PC-9 (cell line): ENCODE measurements at regions of chr1 and their contacts with region 1.

Region 1: DNA sequence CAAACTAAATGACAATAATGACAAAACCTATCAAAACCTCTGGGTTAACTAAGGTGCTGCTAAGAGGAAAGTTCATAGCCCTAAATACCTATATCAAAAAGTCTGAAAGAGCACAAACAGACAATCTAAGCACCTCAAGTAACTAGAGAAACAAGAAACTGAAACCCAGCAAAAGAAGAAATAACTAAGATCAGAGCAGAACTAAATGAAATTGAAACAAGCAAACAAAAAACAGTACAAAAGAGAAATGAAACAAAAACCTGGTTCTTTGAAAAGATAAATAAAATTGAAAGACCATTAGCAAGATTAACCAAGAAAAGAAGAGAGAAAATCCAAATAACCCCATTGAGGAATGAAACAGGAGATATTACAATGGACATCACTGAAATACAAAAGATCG is 44.8 kb upstream of the KIAA0040 start:
- DNase-seq: no peak
- H3K4me3 ChIP-seq: no peak overlapping the region
- H3K27ac ChIP-seq: no peak overlapping the region
- H3K4me1 ChIP-seq: peaks cover 12% of the 10 kb centered on the region
- H3K27me3 ChIP-seq: no peaks in the 10 kb centered on the region
- CTCF ChIP-seq: no peak

Region 2: GRCh38 chr1:174858301-174858700 is 379.1 kb before region 1 on chr1:
- CTCF ChIA-PET with region 1: no interaction called
- POLR2A ChIA-PET with region 1: no interaction called
- intact Hi-C with region 1: no loop called
- DNase-seq: no peak
- H3K4me3 ChIP-seq: no peak overlapping the region
- H3K27ac ChIP-seq: no peak overlapping the region
- H3K4me1 ChIP-seq: no peaks in the 10 kb centered on the region
- H3K27me3 ChIP-seq: no peaks in the 10 kb centered on the region
- CTCF ChIP-seq: no peak

Region 3: GRCh38 chr1:175262621-175263020 is 25.2 kb after region 1 on chr1:
- CTCF ChIA-PET with region 1: no interaction called
- POLR2A ChIA-PET with region 1: no interaction called
- intact Hi-C with region 1: loop called (anchors 1 kb)
- DNase-seq: no peak
- H3K4me3 ChIP-seq: no peak overlapping the region
- H3K27ac ChIP-seq: no peak overlapping the region
- H3K4me1 ChIP-seq: peaks cover 11% of the 10 kb centered on the region
- H3K27me3 ChIP-seq: no peaks in the 10 kb centered on the region
- CTCF ChIP-seq: no peak